ENCODE measurements at regions of chr2 and their contacts with region 1.

Region 1: DNA sequence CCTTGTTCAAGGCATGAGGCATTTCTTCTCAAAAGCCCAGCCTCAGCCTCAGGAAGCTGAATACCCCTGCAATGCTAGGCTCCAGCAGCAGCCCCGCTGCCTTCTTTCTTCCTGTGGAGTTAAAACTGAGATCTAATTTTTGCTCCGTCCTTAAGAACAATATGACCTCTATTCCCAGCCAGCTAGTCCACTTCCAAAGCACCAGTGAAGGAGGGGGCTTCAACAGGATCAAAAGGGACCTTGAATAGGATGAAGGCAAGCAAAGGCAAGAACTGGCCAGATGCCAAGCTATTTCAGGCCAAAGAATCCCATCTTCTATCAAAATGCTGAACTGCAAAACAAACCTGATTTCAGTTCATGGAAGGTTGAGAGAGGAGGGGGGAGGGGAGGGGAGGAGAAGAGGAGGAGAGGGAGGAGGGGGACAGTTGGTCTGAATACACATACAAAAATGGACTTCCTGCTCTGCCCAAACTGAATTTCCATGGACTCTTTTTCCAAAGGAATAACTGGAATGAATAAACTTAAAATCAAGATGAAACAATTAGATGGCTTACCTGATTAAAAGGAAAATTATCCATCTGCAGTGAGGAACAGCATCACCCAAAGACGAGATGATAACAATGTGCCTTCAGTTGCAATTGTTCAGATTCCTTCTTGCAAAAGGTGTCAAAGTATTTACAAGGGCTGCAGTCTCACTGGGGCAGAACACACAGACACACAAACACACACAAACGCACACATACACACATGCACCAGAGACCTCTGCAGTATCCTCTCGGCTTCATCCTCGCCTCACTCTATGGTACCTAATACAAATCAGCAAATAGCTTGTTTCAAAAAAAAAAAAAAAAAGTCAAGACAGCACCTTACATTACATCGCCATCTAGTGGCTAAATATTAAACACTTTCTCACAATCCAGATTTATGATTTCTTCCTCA is at the start of gene SCN1A:
- DNase-seq: no peak
- H3K4me3 ChIP-seq: no peak within 1 kb of the TSS
- H3K27ac ChIP-seq: no peak within 1 kb of the TSS
- H3K4me1 ChIP-seq: peaks cover 0 to 6% (median 0%) of the 10 kb centered on the region in 4 donors
- H3K27me3 ChIP-seq: no peaks in the 10 kb centered on the region
- CTCF ChIP-seq: peak; percentile 47 to 62 (median 57)
- EP300 ChIP-seq: no peak
- POLR2A ChIP-seq: no peak
- total RNA-seq, gene SCN1A: not detected

Region 2: DNA sequence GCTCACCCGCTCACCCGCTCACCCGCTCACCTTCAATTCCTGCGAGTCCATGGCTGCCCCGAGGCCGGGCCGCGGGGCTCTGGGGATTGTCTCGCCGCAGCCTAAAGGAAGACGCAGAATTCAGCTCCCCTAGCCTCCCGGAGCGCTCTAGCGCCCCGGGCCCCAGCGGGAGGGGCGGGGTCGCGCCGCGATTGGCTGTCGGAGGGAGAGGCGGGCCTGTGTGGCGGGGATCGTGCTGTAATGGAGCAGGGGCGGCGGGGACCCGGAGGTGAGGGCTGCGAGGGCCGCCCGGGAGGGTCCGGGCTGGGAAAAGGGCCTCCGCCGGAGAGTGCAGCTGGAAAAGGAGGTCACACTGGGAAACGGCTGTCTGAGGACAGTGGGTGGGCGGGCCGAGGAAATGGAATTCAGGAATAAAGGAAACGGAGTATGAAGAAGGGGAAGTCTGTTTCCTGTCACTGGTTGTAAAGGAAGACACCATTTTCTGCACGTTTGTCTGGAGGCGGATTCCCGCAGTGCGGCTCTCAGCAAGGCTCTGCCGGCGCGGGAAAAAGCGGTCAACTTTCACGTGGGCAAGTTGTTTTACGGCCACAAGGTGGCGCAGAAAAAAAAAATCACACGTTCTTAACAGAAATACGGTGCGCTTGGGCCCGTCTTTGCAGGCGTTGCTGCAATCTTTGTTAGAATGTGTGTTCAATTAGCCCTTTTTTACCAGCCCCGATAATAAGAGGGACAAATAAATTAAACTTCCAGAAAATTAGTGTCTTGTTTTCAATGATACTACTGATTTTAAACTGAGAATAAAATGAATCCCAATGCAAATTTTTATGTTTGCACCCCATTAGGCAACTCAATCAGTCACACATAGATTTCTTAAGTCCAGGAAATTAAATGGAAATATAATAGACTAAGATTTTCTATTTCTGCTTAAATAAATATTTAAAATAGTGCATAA is 173.6 kb before region 1 on chr2 and contains the start of gene TTC21B:
- in situ Hi-C with region 1: no loop called
- intact Hi-C with region 1: loop called (anchors 5 kb)
- DNase-seq: peak; percentile 95
- H3K4me3 ChIP-seq: peak within 1 kb of the TSS; percentile 47 to 91 (median 80)
- H3K27ac ChIP-seq: peak within 1 kb of the TSS; percentile 90 to 96 (median 92)
- H3K4me1 ChIP-seq: peaks cover 7 to 28% (median 16%) of the 10 kb centered on the region in 4 donors
- H3K27me3 ChIP-seq: no peaks in the 10 kb centered on the region
- CTCF ChIP-seq: peak; percentile 82 to 92 (median 85)
- EP300 ChIP-seq: no peak
- POLR2A ChIP-seq: peak; percentile 69
- total RNA-seq, gene TTC21B: 11.9 to 33.8 (median 23.0) TPM

Region 3: GRCh38 chr2:166057370-166058164 is 69.9 kb before region 1 on chr2:
- in situ Hi-C with region 1: no loop called
- intact Hi-C with region 1: loop called (anchors 5 kb)
- DNase-seq: no peak
- H3K4me3 ChIP-seq: no peak overlapping the region
- H3K27ac ChIP-seq: no peak overlapping the region
- H3K4me1 ChIP-seq: no peaks in the 10 kb centered on the region
- H3K27me3 ChIP-seq: no peaks in the 10 kb centered on the region
- CTCF ChIP-seq: peak; percentile 11 to 53 (median 36)
- EP300 ChIP-seq: no peak
- POLR2A ChIP-seq: no peak

Measured in transverse colon (tissue), 4 donors.